H1 (cell line): ENCODE measurements at regions of chr9 and their contacts with region 1.

Region 1: GRCh38 chr9:110427497-110428104 is 89.9 kb upstream of the TXNDC8 start:
- DNase-seq: peak; percentile 29 to 79
- H3K4me3 ChIP-seq: no peak overlapping the region
- H3K27ac ChIP-seq: no peak overlapping the region
- H3K4me1 ChIP-seq: no peaks in the 10 kb centered on the region
- H3K27me3 ChIP-seq: no peaks in the 10 kb centered on the region
- CTCF ChIP-seq: peak; percentile 76 to 88 (median 86)
- EP300 ChIP-seq: no peak
- POLR2A ChIP-seq: no peak
- RAD21 ChIP-seq: peak; percentile 77 to 79

Region 2: GRCh38 chr9:110399983-110400382 is 27.6 kb before region 1 on chr9:
- CTCF ChIA-PET with region 1: no interaction called
- POLR2A ChIA-PET with region 1: no interaction called
- DNase-seq: no peak
- H3K4me3 ChIP-seq: no peak overlapping the region
- H3K27ac ChIP-seq: no peak overlapping the region
- H3K4me1 ChIP-seq: no peaks in the 10 kb centered on the region
- H3K27me3 ChIP-seq: no peaks in the 10 kb centered on the region
- CTCF ChIP-seq: no peak
- EP300 ChIP-seq: no peak
- POLR2A ChIP-seq: no peak
- RAD21 ChIP-seq: no peak

Region 3: DNA sequence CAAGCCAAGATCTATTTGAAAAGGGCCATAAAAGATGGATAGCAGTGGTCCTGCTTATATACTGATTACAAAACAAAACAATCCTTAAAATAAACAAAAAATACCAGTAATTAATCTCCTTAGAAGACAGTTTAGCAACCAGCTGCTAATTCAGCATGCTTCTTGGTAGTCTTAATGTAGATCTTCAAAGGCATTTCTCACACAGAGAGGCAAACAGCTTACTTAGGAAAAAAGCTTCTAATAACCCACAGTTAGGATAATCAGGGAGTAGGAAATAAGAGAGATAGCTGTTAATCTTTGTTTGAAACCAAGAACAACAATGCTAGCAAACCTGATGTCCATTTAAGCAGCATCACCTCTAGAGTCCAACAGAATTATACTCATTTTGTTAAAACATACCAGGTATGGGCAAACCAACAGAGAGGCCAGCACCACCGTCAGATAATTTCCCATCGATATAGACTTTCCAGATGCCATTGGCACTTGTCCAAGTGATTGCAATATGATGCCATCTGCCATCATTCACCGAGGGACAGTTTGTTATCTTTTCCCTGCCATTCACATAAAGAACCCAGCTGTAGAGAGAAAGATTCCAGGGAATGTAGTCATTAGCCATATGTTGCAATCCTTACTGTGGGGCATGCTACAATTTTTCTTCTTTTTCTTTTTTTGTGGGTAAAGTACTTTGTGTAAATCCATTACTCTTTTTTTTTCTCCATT is 15.7 kb after region 1 on chr9:
- CTCF ChIA-PET with region 1: interaction called, 11 read pairs
- POLR2A ChIA-PET with region 1: no interaction called
- DNase-seq: no peak
- H3K4me3 ChIP-seq: no peak overlapping the region
- H3K27ac ChIP-seq: no peak overlapping the region
- H3K4me1 ChIP-seq: no peaks in the 10 kb centered on the region
- H3K27me3 ChIP-seq: no peaks in the 10 kb centered on the region
- CTCF ChIP-seq: no peak
- EP300 ChIP-seq: no peak
- POLR2A ChIP-seq: no peak
- RAD21 ChIP-seq: no peak

Region 4: GRCh38 chr9:110623462-110624025 is 195.9 kb after region 1 on chr9:
- CTCF ChIA-PET with region 1: interaction called, 11 read pairs
- POLR2A ChIA-PET with region 1: no interaction called
- DNase-seq: peak in 1 of 2 experiments; percentile 51
- H3K4me3 ChIP-seq: no peak overlapping the region
- H3K27ac ChIP-seq: no peak overlapping the region
- H3K4me1 ChIP-seq: peaks cover 0 to 7% (median 0%) of the 10 kb centered on the region in 4 experiments; a peak in 1 of 7 replicates
- H3K27me3 ChIP-seq: no peaks in the 10 kb centered on the region
- CTCF ChIP-seq: peak in 2 of 3 experiments; percentile 48 to 68; a peak in 3 of 4 replicates
- EP300 ChIP-seq: no peak
- POLR2A ChIP-seq: no peak
- RAD21 ChIP-seq: peak; percentile 89 to 93